ENCODE measurements at regions of chr6 and their contacts with region 1.

Region 1: GRCh38 chr6:133198725-133199124 is 42.4 kb upstream of the EYA4 start:
- DNase-seq: no peak
- ATAC-seq: no peak
- H3K4me3 ChIP-seq: no peak overlapping the region
- H3K27ac ChIP-seq: no peak overlapping the region
- H3K4me1 ChIP-seq: no peaks in the 10 kb centered on the region
- H3K27me3 ChIP-seq: no peaks in the 10 kb centered on the region
- CTCF ChIP-seq: no peak

Region 2: DNA sequence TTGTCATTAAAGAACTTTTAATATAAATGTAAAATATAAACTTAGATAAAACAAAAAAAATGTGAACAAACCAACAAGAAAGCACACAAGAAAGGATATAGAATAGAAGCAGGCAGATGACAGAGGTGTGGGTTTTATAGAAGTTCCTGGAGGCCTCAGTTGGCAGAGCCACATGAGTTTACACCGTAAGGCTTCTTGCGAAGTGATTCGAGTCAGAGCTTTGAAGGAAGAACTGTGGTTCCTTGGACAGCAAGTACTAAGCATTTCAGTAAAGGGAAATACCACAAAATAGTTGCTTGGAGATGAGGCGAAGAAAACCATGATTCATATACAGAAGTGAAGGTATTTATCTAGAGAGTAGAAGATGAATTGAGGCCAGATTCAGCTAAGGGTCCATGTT is 165.5 kb before region 1 on chr6:
- intact Hi-C with region 1: no loop called
- DNase-seq: no peak
- ATAC-seq: no peak
- H3K4me3 ChIP-seq: no peak overlapping the region
- H3K27ac ChIP-seq: no peak overlapping the region
- H3K4me1 ChIP-seq: no peaks in the 10 kb centered on the region
- H3K27me3 ChIP-seq: no peaks in the 10 kb centered on the region
- CTCF ChIP-seq: no peak

Region 3: DNA sequence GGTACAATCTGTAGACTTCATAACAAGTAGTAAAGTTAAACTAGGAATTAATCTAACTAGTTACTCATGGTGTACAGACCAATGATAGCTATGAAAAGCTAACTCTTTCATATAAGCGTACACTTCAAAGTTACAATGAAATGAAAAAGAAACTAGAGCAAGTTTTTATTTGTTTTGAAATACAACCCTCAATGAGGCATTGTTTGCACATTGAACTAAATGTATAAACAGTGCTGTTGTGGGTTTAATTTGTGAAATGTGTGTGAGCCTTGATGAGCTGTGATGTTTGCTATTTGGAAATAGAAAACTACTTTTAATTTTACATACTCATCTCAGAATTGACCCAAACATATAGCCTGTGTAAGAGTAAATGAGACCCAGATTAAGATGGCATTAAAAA is 31.3 kb after region 1 on chr6:
- intact Hi-C with region 1: loop called in 1 of 2 experiments (anchors 5 kb)
- DNase-seq: no peak
- ATAC-seq: no peak
- H3K4me3 ChIP-seq: no peak overlapping the region
- H3K27ac ChIP-seq: no peak overlapping the region
- H3K4me1 ChIP-seq: peaks cover 8% of the 10 kb centered on the region
- H3K27me3 ChIP-seq: no peaks in the 10 kb centered on the region
- CTCF ChIP-seq: no peak

Region 4: GRCh38 chr6:133512410-133513016 is 313.8 kb after region 1 on chr6:
- intact Hi-C with region 1: loop called (anchors 10 kb)
- DNase-seq: peak in 1 of 2 donors; percentile 26
- ATAC-seq: peak in 2 of 4 donors; percentile 73
- H3K4me3 ChIP-seq: no peak overlapping the region
- H3K27ac ChIP-seq: no peak overlapping the region
- H3K4me1 ChIP-seq: no peaks in the 10 kb centered on the region
- H3K27me3 ChIP-seq: no peaks in the 10 kb centered on the region
- CTCF ChIP-seq: peak; percentile 54

Region 5: GRCh38 chr6:133548414-133549159 is 349.9 kb after region 1 on chr6:
- intact Hi-C with region 1: loop called in 1 of 2 experiments (anchors 5 kb)
- DNase-seq: no peak
- ATAC-seq: no peak
- H3K4me3 ChIP-seq: no peak overlapping the region
- H3K27ac ChIP-seq: peak overlapping the region; percentile 82
- H3K4me1 ChIP-seq: peaks cover 42% of the 10 kb centered on the region
- H3K27me3 ChIP-seq: no peaks in the 10 kb centered on the region
- CTCF ChIP-seq: no peak